Ovary (tissue), 10 donors: ENCODE measurements at regions of chr6 and their contacts with region 1.

Region 1: GRCh38 chr6:108039681-108040080 is 34.9 kb downstream of the OSTM1 start:
- DNase-seq: no peak
- H3K4me3 ChIP-seq: no peak overlapping the region
- H3K27ac ChIP-seq: no peak overlapping the region
- H3K4me1 ChIP-seq: no peaks in the 10 kb centered on the region
- H3K27me3 ChIP-seq: no peaks in the 10 kb centered on the region
- CTCF ChIP-seq: no peak
- EP300 ChIP-seq: no peak
- POLR2A ChIP-seq: no peak

Region 2: GRCh38 chr6:107957909-107958688 is 81.6 kb before region 1 on chr6 and contains the start of gene SEC63:
- intact Hi-C with region 1: no loop called
- DNase-seq: peak; percentile 97 to 98 (median 97)
- H3K4me3 ChIP-seq: peak within 1 kb of the TSS; percentile 96
- H3K27ac ChIP-seq: peak within 1 kb of the TSS; percentile 54 to 80
- H3K4me1 ChIP-seq: peaks cover 10% of the 10 kb centered on the region
- H3K27me3 ChIP-seq: no peaks in the 10 kb centered on the region
- CTCF ChIP-seq: no peak
- EP300 ChIP-seq: no peak
- POLR2A ChIP-seq: peak; percentile 74
- total RNA-seq, gene SEC63: 33.8 to 198 (median 144) TPM

Region 3: DNA sequence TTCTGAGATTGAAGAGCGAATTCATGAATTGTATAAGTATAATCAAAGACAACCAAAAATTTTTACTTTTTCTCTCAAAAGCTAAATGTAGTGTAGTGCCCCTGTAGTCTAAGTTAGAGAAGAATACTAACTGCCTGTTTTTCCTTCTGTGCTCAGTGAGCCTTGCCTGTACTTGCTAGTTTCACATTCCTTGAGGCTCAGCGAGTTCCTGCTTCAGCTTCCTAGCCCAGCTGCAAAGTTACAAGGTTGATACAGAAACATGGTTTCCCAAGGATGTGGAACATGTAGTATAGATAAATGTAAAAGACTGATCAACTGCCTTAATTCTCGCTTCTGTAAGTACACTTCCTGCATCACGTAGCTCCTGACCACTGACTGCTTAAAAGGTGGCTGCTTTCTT is 48.6 kb before region 1 on chr6:
- intact Hi-C with region 1: loop called in 1 of 4 experiments (anchors 10 kb)
- DNase-seq: no peak
- H3K4me3 ChIP-seq: no peak overlapping the region
- H3K27ac ChIP-seq: no peak overlapping the region
- H3K4me1 ChIP-seq: no peaks in the 10 kb centered on the region
- H3K27me3 ChIP-seq: no peaks in the 10 kb centered on the region
- CTCF ChIP-seq: no peak
- EP300 ChIP-seq: no peak
- POLR2A ChIP-seq: no peak